GM12878 (cell line): ENCODE measurements at regions of chr11 and their contacts with region 1.

Region 1: DNA sequence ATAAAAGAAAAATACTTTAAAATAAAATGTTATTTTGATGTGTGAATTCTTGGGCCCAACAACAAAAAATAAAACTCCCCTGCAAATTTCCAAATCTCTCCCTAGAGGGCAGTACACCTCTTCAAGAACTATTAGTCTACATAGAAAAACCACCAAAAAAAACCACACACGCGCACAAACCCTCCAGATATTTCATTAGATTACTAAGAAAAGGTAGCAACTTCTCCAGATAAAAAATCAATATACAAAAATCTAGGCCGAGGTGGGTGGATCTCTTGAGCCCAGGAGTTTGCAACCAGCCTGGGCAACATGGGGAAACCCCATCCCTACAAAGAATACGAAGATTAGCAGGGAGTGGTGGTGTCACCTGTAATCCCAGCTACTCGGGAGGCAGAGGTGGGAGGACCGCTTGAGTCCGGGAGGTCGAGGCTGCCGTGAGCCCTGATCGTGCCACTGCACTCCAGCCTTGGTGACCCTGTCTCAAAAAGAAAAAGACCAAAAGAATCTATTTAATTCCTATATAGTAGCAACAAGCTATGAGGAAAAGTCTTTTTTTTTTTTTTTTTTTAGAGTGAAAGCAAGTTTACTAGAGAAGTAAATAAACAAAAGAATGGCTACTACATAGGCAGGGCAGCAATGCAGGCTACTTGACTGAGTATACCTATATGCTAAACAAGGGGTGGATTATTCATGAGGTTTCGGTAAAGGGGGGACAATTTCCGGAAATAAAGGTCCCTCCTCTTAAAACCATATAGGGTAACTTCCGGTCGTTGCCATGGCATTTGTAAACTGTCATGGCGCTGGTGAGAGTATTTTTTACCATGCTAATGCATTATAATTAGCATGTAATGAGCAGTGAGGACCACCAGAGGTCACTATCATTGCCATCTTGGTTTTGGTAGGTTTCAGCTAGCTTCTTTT is 13.1 kb downstream of the B3GNT6 start:
- DNase-seq: peak; percentile 92
- ATAC-seq: peak; percentile 97
- H3K4me3 ChIP-seq: peak overlapping the region; percentile 15; the same call in 1 of the 2 replicates
- H3K27ac ChIP-seq: no peak overlapping the region
- H3K4me1 ChIP-seq: no peaks in the 10 kb centered on the region; the same call in 1 of the 2 replicates
- H3K27me3 ChIP-seq: no peaks in the 10 kb centered on the region; a peak in 1 of 4 replicates
- CTCF ChIP-seq: peak; percentile 45 to 70 (median 59); a peak in 5 of 6 replicates
- EP300 ChIP-seq: no peak; a peak in 1 of 4 replicates
- POLR2A ChIP-seq: no peak
- RAD21 ChIP-seq: peak; percentile 58

Region 2: GRCh38 chr11:76885390-76886097 is 161.7 kb before region 1 on chr11:
- CTCF ChIA-PET with region 1: no interaction called
- POLR2A ChIA-PET with region 1: no interaction called
- RAD21 ChIA-PET with region 1: no interaction called
- SMC1A ChIA-PET with region 1: no interaction called
- in situ Hi-C with region 1: no loop called
- intact Hi-C with region 1: no loop called
- DNase-seq: no peak
- ATAC-seq: peak; percentile 25
- H3K4me3 ChIP-seq: no peak overlapping the region
- H3K27ac ChIP-seq: no peak overlapping the region
- H3K4me1 ChIP-seq: peaks cover 4% of the 10 kb centered on the region; the same call in 1 of the 2 replicates
- H3K27me3 ChIP-seq: no peaks in the 10 kb centered on the region
- CTCF ChIP-seq: no peak
- EP300 ChIP-seq: no peak
- POLR2A ChIP-seq: no peak
- RAD21 ChIP-seq: no peak

Region 3: DNA sequence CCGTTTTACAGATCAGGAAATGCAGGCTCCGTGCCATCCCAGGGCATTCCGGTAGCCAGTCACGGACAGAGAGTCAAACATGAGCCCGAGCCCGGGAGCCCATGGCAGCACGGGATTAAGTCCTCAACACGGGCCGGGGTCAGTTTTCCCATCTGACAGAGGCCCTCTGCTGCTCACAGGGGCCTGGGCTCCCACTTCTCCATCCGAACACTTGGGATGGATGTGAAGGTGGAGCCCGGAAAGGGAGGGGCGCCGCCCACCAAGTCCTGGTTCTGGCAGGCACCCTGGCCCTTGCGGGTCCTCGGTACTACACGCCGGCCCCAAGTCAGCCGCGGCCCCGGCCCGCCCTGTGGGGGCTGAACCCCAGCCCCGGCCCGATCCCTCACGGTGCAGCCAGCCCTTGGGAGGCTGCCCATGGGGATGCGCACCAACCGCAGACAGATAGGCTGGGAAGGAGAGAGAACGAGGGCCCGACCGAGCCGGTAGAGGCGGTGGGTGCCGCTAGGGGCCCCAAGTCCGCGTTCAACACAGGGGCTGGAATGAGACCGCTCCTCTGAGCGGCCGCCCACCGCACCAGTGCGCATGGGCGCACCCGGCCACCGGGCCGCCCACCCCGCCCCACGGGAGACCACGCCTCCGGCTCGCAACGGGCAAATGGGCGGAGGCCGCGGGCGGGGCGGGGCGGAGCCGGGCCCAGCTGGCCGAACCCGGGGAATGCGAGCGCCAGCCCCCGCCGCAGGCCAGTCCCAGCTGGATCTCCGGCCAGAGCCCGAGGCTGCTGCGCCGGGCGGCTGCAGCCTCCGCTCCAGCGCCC is 19.2 kb after region 1 on chr11 and contains the start of gene CAPN5:
- CTCF ChIA-PET with region 1: interaction called, 11 read pairs
- POLR2A ChIA-PET with region 1: no interaction called
- RAD21 ChIA-PET with region 1: interaction called, 4 read pairs
- SMC1A ChIA-PET with region 1: interaction called, 3 read pairs
- in situ Hi-C with region 1: no loop called
- intact Hi-C with region 1: loop called (anchors 1 kb)
- DNase-seq: no peak
- ATAC-seq: peak; percentile 98
- H3K4me3 ChIP-seq: peak within 1 kb of the TSS; percentile 64
- H3K27ac ChIP-seq: no peak within 1 kb of the TSS
- H3K4me1 ChIP-seq: peaks cover 6% of the 10 kb centered on the region
- H3K27me3 ChIP-seq: peaks cover 0 to 1% of the 10 kb centered on the region in 2 experiments; a peak in 2 of 4 replicates
- CTCF ChIP-seq: peak; percentile 15 to 31 (median 25); a peak in 3 of 6 replicates
- EP300 ChIP-seq: no peak
- POLR2A ChIP-seq: peak; percentile 59
- RAD21 ChIP-seq: no peak
- polyA plus RNA-seq, gene CAPN5: 0.02 TPM in 1 of 2 experiments, not detected in the other